Endothelial cell of umbilical vein (primary cell): ENCODE measurements at regions of chr9 and their contacts with region 1.

Region 1: DNA sequence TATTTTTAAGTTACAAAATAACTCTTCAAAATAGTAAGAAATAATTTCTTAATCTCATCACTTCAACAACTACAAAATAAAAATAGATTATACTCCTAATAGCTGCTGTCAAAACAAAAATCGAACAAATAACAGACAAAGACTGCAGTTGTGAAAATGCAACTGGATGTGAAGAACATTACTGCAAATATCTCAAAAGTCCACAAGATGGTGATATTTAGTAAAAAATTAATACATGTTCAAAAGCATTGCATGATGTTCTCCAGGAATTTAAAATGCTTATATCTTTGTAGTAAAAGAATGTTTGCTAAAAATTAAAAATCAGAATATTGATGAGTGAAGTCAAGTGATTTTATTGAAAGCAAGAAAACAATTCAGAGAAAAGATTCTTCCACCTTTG is 66.2 kb downstream of the MPDZ start:
- DNase-seq: peak; percentile 44
- H3K4me3 ChIP-seq: no peak overlapping the region
- H3K27ac ChIP-seq: no peak overlapping the region
- H3K4me1 ChIP-seq: peaks cover 27% of the 10 kb centered on the region
- H3K27me3 ChIP-seq: no peaks in the 10 kb centered on the region
- CTCF ChIP-seq: peak in 1 of 2 donors; percentile 22
- POLR2A ChIP-seq: no peak

Region 2: DNA sequence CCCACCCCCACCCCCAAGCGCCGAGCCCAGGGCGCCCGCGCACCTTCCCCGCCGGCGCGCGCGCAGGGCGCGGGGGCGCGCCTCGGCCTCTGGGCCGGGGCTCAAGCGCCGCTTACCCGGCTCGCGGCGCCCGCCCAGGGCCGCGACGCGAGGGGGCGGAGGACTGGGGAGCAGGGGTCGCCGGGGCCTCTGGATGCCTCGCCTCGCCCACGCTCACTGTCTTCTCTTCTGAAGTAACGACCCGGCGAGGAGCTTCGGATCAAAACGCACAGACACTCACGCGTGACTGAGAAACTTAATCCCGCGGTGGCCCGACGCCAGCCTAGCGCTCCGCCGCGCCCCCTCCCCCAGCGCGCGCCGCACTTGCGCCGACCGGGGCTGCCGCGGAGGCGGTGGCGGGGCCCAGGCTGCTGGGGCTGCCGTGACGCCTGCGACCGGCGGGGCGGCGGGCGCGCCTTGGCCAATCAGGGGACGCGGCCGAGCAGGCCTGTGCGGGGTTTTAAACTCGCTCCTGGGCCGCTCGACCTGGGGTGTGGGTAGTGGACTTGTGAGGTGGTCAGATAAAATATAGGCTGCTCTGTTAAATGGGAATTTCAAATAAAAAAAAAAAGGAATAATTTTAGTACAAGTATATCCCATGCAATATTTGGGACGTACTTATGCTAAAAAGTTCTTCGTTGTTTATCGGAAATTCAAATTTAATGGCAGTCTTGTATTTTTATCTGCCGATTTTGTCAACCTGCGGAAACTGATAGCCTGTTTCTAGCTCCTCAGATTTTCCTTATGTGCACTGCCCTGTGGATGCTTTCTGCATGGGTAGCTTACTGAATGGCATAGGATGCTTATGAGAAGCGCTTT is 66.2 kb after region 1 on chr9 and contains the start of gene MPDZ:
- CTCF ChIA-PET with region 1: no interaction called
- POLR2A ChIA-PET with region 1: no interaction called
- dilution Hi-C with region 1: no loop called
- intact Hi-C with region 1: loop called (anchors 1 kb)
- DNase-seq: peak; percentile 81
- H3K4me3 ChIP-seq: peak within 1 kb of the TSS; percentile 22 to 74 (median 74)
- H3K27ac ChIP-seq: peak within 1 kb of the TSS; percentile 91
- H3K4me1 ChIP-seq: peaks cover 25% of the 10 kb centered on the region
- H3K27me3 ChIP-seq: no peaks in the 10 kb centered on the region
- CTCF ChIP-seq: no peak
- POLR2A ChIP-seq: peak; percentile 28
- total RNA-seq, gene MPDZ: 52.3 and 54.4 TPM in 2 replicates

Region 3: GRCh38 chr9:13351778-13352386 is 138.5 kb after region 1 on chr9:
- CTCF ChIA-PET with region 1: interaction called, 6 read pairs
- POLR2A ChIA-PET with region 1: interaction called, 3 read pairs
- dilution Hi-C with region 1: no loop called
- intact Hi-C with region 1: loop called (anchors 2 kb)
- DNase-seq: peak; percentile 74
- H3K4me3 ChIP-seq: no peak overlapping the region
- H3K27ac ChIP-seq: no peak overlapping the region
- H3K4me1 ChIP-seq: no peaks in the 10 kb centered on the region
- H3K27me3 ChIP-seq: no peaks in the 10 kb centered on the region
- CTCF ChIP-seq: peak; percentile 32 to 37
- POLR2A ChIP-seq: no peak

Region 4: GRCh38 chr9:13575558-13575957 is 362.2 kb after region 1 on chr9:
- CTCF ChIA-PET with region 1: no interaction called
- POLR2A ChIA-PET with region 1: no interaction called
- dilution Hi-C with region 1: no loop called
- intact Hi-C with region 1: loop called (anchors 5 kb)
- DNase-seq: peak; percentile 95
- H3K4me3 ChIP-seq: no peak overlapping the region
- H3K27ac ChIP-seq: peak overlapping the region; percentile 89
- H3K4me1 ChIP-seq: peaks cover 23% of the 10 kb centered on the region
- H3K27me3 ChIP-seq: no peaks in the 10 kb centered on the region
- CTCF ChIP-seq: no peak
- POLR2A ChIP-seq: no peak